ENCODE measurements at regions of chr1 and their contacts with region 1.

Region 1: GRCh38 chr1:226062558-226063223 is at the start of gene H3-3A:
- DNase-seq: peak; percentile 98 to 99 (median 99)
- H3K4me3 ChIP-seq: peak within 1 kb of the TSS; percentile 69 to 95 (median 84)
- H3K27ac ChIP-seq: peak within 1 kb of the TSS; percentile 99
- H3K4me1 ChIP-seq: peaks cover 6 to 44% of the 10 kb centered on the region in 2 donors
- H3K27me3 ChIP-seq: no peaks in the 10 kb centered on the region
- CTCF ChIP-seq: peak in 1 of 6 experiments; percentile 29
- POLR2A ChIP-seq: peak; percentile 98 to 100
- total RNA-seq, gene H3-3A: 216 to 543 (median 373) TPM

Region 2: GRCh38 chr1:226186124-226187018 is 123.7 kb after region 1 on chr1 and contains the start of gene ACBD3:
- intact Hi-C with region 1: loop called in 1 of 2 experiments (anchors 10 kb)
- DNase-seq: peak; percentile 84 to 93 (median 88)
- H3K4me3 ChIP-seq: peak within 1 kb of the TSS; percentile 76 to 81 (median 76)
- H3K27ac ChIP-seq: peak within 1 kb of the TSS; percentile 82 to 95 (median 92)
- H3K4me1 ChIP-seq: peaks cover 13 to 46% of the 10 kb centered on the region in 2 donors
- H3K27me3 ChIP-seq: no peaks in the 10 kb centered on the region
- CTCF ChIP-seq: peak in 2 of 6 experiments; percentile 28 to 43
- POLR2A ChIP-seq: peak; percentile 64 to 80
- total RNA-seq, gene ACBD3: 25.0 to 44.1 (median 34.5) TPM

Measured in adrenal gland (tissue), 19 donors.